ENCODE measurements at regions of chr3 and their contacts with region 1.

Region 1: GRCh38 chr3:65732051-65732935 is 306.4 kb downstream of the MAGI1 start:
- DNase-seq: no peak
- H3K4me3 ChIP-seq: no peak overlapping the region
- CTCF ChIP-seq: peak; percentile 72

Region 2: DNA sequence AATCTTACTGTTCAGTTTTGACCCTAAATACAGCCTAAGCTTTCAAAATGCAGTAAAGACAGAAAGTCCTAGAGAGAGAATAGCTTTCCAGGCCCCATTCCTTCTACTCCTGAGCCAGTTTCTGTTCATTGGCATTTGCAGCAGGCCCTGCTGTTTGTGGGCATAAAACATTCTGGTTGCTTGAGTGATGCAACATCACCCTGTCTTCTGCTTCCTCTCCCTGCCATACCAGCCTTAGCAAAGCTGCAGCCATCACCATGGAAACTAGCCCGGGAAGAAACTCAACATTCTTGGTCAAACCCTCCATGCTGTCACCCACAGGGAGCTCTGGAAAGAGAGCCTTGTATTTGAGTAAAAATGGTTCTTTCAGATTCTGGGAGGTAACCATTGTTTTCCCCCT is 19.3 kb before region 1 on chr3:
- CTCF ChIA-PET with region 1: interaction called, 12 read pairs
- POLR2A ChIA-PET with region 1: no interaction called
- DNase-seq: peak; percentile 84
- H3K4me3 ChIP-seq: no peak overlapping the region
- CTCF ChIP-seq: no peak

Region 3: GRCh38 chr3:65742914-65743313 is 10.6 kb after region 1 on chr3:
- CTCF ChIA-PET with region 1: interaction called, 14 read pairs
- POLR2A ChIA-PET with region 1: no interaction called
- DNase-seq: no peak
- H3K4me3 ChIP-seq: no peak overlapping the region
- CTCF ChIP-seq: no peak

Region 4: DNA sequence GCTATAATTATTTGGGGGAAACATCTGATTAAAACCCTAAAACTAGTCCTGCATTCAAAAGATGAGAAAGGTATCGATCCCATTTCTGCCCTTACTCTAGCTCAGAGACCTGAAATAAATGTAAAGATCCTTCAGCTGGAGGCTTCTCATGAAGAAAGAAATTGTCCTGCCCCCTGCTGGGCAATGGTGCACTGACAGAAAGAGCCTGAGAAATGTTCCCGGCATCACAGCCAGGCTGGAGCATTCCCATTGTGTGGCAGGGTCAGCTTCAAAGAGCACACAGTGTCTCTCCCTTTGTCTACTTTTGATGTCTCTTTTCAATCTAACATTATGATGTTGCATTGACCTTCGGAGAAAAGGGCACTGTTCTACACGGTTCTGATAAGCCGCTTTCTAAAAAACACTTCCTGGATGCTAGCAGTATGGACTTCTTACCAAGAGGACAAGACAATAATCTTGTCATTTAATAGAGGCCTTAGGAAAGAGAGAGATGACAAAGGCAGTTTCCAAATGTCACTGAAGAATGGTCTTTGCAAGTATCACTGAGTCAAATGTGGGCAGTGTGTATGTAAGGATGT is 18.9 kb after region 1 on chr3:
- CTCF ChIA-PET with region 1: interaction called, 20 read pairs
- POLR2A ChIA-PET with region 1: no interaction called
- DNase-seq: no peak
- H3K4me3 ChIP-seq: no peak overlapping the region
- CTCF ChIP-seq: peak; percentile 70

Region 5: GRCh38 chr3:65854606-65855313 is 122.5 kb after region 1 on chr3:
- CTCF ChIA-PET with region 1: no interaction called
- POLR2A ChIA-PET with region 1: no interaction called
- DNase-seq: no peak
- H3K4me3 ChIP-seq: no peak overlapping the region
- CTCF ChIP-seq: no peak

Measured in AG04449 (cell line).